ENCODE measurements at regions of chr19 and their contacts with region 1.

Region 1: DNA sequence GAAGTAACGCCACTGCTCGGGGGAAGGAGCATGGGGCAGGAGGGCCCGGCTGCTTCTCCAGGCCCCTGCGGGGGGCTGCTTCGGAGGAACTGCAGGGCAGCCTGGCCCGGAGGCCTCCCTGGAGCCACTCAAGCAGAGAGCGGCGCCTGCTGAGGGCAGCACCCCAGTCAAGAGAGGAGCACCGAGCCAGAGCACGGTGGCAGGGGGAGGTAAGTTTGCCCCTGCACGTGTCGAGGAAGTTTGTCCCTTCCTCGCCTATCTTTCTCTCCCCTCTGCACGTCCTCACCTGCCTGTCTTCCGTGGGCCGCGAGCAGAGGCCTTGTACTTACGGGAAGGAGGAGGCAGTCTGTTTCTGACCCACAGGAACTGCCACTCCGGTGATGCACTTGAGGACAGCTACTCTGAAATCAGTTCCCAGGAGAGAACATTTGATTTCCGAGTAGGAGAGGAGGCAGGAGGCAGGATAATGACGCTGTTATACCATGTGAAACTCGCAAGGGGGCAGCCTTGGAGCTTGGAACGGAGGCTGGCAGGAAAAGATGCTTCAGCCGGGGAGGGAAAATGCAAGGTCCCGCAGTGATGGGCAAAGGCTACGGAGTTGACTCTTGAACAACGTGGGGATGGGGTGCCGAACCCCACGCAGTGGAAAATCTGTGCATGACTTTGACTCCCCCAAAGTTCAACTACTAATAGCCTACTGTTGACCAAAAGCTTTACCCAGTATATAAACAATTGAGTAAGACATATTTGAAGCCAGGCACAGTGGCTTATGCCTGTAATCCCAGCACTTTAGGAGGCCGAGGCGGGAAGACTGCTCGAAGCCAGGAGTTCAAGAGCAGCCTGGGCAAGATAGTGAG is 5.0 kb downstream of the FFAR1 start:
- DNase-seq: peak; percentile 56 to 73 (median 68)
- ATAC-seq: peak; percentile 67 to 80 (median 78)
- H3K4me3 ChIP-seq: no peak overlapping the region
- H3K27ac ChIP-seq: no peak overlapping the region
- H3K4me1 ChIP-seq: peaks cover 0 to 16% (median 0%) of the 10 kb centered on the region in 12 donors
- H3K27me3 ChIP-seq: peaks cover 0 to 12% (median 0%) of the 10 kb centered on the region in 9 donors
- CTCF ChIP-seq: peak; percentile 61 to 83 (median 80)
- POLR2A ChIP-seq: no peak

Region 2: DNA sequence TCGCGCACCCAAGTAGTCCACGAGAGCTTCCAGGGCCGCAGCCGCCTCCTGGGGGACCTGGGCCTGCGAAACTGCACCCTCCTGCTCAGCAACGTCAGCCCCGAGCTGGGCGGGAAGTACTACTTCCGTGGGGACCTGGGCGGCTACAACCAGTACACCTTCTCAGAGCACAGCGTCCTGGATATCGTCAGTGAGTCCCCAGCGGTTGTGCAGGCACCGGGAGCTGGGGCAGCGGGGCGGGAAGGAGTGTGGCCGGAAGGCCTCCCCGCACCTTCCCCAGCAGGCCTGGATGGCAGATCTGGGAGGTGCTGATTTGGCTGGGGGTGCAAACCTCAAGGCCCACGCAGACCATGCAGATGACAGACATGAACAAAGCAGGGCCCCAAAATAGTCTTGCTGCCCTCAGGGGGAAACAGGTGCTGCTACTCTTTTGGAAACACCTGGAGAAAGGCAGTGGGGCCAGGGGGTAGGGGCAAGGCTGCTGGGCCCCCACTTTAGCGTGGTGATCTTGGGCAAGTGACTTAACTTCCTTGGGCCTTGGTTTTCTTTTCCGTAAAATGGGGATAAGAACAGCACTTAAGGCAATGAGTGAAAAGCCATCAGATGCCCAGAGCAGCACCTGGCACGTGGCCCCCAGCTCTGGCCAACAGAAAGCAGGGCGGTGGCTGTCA is 56.7 kb before region 1 on chr19:
- intact Hi-C with region 1: no loop called
- DNase-seq: no peak
- ATAC-seq: no peak
- H3K4me3 ChIP-seq: no peak overlapping the region
- H3K27ac ChIP-seq: no peak overlapping the region
- H3K4me1 ChIP-seq: peaks cover 0 to 5% (median 0%) of the 10 kb centered on the region in 12 donors
- H3K27me3 ChIP-seq: peaks cover 0 to 54% (median 21%) of the 10 kb centered on the region in 9 donors
- CTCF ChIP-seq: no peak
- POLR2A ChIP-seq: no peak

Region 3: GRCh38 chr19:35436477-35437405 is 84.1 kb after region 1 on chr19:
- intact Hi-C with region 1: no loop called
- DNase-seq: no peak
- ATAC-seq: peak in 3 of 4 donors; percentile 46 to 55 (median 52)
- H3K4me3 ChIP-seq: peak overlapping the region in 2 of 12 donors; percentile 12 to 25
- H3K27ac ChIP-seq: peak overlapping the region in 8 of 12 donors; percentile 9 to 81 (median 30)
- H3K4me1 ChIP-seq: peaks cover 6 to 75% (median 31%) of the 10 kb centered on the region in 12 donors
- H3K27me3 ChIP-seq: no peaks in the 10 kb centered on the region
- CTCF ChIP-seq: no peak
- POLR2A ChIP-seq: no peak

Region 4: GRCh38 chr19:35468637-35469036 is 116.0 kb after region 1 on chr19:
- intact Hi-C with region 1: loop called (anchors 1 to 5 kb)
- DNase-seq: peak in 4 of 5 donors; percentile 50 to 73 (median 56)
- ATAC-seq: peak; percentile 88 to 92 (median 90)
- H3K4me3 ChIP-seq: no peak overlapping the region
- H3K27ac ChIP-seq: no peak overlapping the region
- H3K4me1 ChIP-seq: peaks cover 0 to 9% (median 0%) of the 10 kb centered on the region in 12 donors
- H3K27me3 ChIP-seq: no peaks in the 10 kb centered on the region
- CTCF ChIP-seq: peak; percentile 55 to 72 (median 60)
- POLR2A ChIP-seq: no peak

Region 5: DNA sequence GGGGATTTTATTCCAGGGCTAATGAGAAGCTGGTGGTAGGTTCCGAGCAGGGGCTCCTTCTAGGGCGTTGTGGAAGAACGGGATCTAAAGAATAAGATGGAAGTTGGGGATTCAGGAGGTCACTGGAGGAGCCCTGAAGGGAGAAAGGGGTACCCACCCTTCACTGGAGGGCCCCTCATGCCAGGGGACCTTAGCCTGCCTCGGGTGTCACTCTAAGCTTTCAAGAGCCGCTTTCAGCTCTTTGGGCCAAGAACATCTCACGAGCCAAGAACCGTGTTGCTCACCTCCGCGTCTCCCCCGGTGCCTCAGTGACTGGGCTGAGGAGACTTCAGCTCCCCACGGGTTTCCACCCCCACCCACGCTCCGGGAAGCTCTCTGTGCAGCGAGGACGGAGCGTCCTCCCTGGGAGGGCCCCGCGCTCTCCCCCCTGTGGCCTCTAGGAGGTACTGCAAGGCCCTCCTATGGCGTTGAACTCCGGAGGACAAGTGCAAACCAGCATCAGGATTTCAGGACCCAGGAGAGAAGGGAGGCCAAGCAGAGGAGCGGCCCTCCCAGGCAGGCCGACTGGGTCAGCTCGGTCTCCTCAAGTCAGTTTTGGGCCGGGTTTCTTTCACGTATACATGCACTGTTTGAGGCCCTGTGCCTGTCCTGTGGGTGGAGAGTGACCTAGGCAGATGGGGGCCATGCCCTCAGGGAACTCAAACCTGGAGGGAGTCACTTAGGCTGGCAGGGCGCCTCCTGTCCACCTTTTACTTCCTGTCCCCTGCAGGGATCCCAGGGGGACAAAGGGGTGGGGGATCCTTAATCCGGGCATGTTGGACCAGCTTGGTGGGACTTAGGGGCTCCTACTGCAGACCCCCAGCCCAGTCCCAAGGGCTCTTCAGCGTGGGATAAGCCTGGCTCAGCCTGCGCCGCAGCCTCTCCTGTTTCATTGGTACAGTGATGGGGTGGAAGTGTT is 142.7 kb after region 1 on chr19:
- intact Hi-C with region 1: loop called (anchors 1 to 5 kb)
- DNase-seq: peak; percentile 61 to 88 (median 71)
- ATAC-seq: peak; percentile 81 to 94 (median 90)
- H3K4me3 ChIP-seq: peak overlapping the region in 1 of 12 donors; percentile 26
- H3K27ac ChIP-seq: no peak overlapping the region
- H3K4me1 ChIP-seq: peaks cover 0 to 7% (median 2%) of the 10 kb centered on the region in 12 donors
- H3K27me3 ChIP-seq: peaks cover 0 to 3% (median 0%) of the 10 kb centered on the region in 9 donors
- CTCF ChIP-seq: peak; percentile 96 to 99 (median 98)
- POLR2A ChIP-seq: no peak

Region 6: DNA sequence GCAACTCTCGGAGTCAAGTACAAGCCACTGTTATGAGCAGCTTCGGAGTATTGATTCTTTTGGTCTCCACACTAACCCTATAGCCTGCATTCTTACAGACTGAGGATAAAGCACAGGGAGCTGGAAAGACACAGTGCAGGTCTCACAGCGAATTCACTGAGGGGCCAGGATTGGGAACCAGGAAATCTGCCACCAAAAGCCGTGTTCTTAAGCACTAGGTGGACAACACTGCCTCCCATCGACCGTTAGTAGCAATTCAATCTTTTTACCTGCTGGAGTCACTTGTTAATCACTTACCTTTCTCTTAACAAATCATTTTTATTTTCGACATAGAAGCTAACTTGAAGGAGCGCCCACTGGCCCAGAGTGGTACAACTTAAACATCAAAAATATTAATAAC is 239.6 kb after region 1 on chr19:
- intact Hi-C with region 1: loop called in 2 of 10 experiments (anchors 5 to 10 kb)
- DNase-seq: no peak
- ATAC-seq: no peak
- H3K4me3 ChIP-seq: no peak overlapping the region
- H3K27ac ChIP-seq: no peak overlapping the region
- H3K4me1 ChIP-seq: no peaks in the 10 kb centered on the region
- H3K27me3 ChIP-seq: peaks cover 0 to 26% (median 6%) of the 10 kb centered on the region in 9 donors
- CTCF ChIP-seq: peak in 11 of 12 donors; percentile 15 to 49 (median 36)
- POLR2A ChIP-seq: no peak

Region 7: GRCh38 chr19:35628565-35629331 is 276.1 kb after region 1 on chr19 and contains the start of gene RBM42:
- intact Hi-C with region 1: no loop called
- DNase-seq: peak; percentile 97 to 98 (median 97)
- ATAC-seq: peak; percentile 100
- H3K4me3 ChIP-seq: peak within 1 kb of the TSS; percentile 75 to 100 (median 95)
- H3K27ac ChIP-seq: peak within 1 kb of the TSS; percentile 75 to 96 (median 92)
- H3K4me1 ChIP-seq: peaks cover 4 to 25% (median 14%) of the 10 kb centered on the region in 12 donors
- H3K27me3 ChIP-seq: no peaks in the 10 kb centered on the region
- CTCF ChIP-seq: no peak
- POLR2A ChIP-seq: peak in 1 of 2 donors; percentile 79
- total RNA-seq, gene RBM42: 47.4 to 70.0 (median 57.5) TPM

Measured in heart left ventricle (tissue), 16 donors.